ENCODE measurements at regions of chr19 and their contacts with region 1.

Region 1: GRCh38 chr19:8615813-8616596 is 5.5 kb upstream of the ADAMTS10 start:
- DNase-seq: peak; percentile 59 to 80 (median 75)
- H3K4me3 ChIP-seq: peak overlapping the region in 1 of 7 experiments; percentile 47
- H3K27ac ChIP-seq: no peak overlapping the region
- H3K4me1 ChIP-seq: peaks cover 0 to 13% (median 4%) of the 10 kb centered on the region in 4 experiments
- H3K27me3 ChIP-seq: no peaks in the 10 kb centered on the region

Region 2: GRCh38 chr19:8557642-8558238 is 58.3 kb before region 1 on chr19:
- CTCF ChIA-PET with region 1: no interaction called
- POLR2A ChIA-PET with region 1: no interaction called
- DNase-seq: no peak
- H3K4me3 ChIP-seq: no peak overlapping the region
- H3K27ac ChIP-seq: no peak overlapping the region
- H3K4me1 ChIP-seq: peaks cover 0 to 13% (median 2%) of the 10 kb centered on the region in 4 experiments
- H3K27me3 ChIP-seq: no peaks in the 10 kb centered on the region

Region 3: GRCh38 chr19:8641908-8642547 is 26.0 kb after region 1 on chr19:
- CTCF ChIA-PET with region 1: interaction called, 19 read pairs
- POLR2A ChIA-PET with region 1: no interaction called
- DNase-seq: peak; percentile 67 to 88 (median 85)
- H3K4me3 ChIP-seq: no peak overlapping the region
- H3K27ac ChIP-seq: no peak overlapping the region
- H3K4me1 ChIP-seq: peaks cover 2 to 52% (median 29%) of the 10 kb centered on the region in 4 experiments
- H3K27me3 ChIP-seq: no peaks in the 10 kb centered on the region